ENCODE measurements at regions of chr15 and their contacts with region 1.

Region 1: GRCh38 chr15:40274350-40275274 is 8.3 kb downstream of the ANKRD63 start:
- DNase-seq: peak; percentile 80
- H3K4me3 Mint-ChIP-seq: no peak overlapping the region
- H3K27ac Mint-ChIP-seq: no peak overlapping the region
- H3K4me1 Mint-ChIP-seq: no peaks in the 10 kb centered on the region
- H3K27me3 Mint-ChIP-seq: no peaks in the 10 kb centered on the region
- CTCF ChIP-seq: peak; percentile 100

Region 2: DNA sequence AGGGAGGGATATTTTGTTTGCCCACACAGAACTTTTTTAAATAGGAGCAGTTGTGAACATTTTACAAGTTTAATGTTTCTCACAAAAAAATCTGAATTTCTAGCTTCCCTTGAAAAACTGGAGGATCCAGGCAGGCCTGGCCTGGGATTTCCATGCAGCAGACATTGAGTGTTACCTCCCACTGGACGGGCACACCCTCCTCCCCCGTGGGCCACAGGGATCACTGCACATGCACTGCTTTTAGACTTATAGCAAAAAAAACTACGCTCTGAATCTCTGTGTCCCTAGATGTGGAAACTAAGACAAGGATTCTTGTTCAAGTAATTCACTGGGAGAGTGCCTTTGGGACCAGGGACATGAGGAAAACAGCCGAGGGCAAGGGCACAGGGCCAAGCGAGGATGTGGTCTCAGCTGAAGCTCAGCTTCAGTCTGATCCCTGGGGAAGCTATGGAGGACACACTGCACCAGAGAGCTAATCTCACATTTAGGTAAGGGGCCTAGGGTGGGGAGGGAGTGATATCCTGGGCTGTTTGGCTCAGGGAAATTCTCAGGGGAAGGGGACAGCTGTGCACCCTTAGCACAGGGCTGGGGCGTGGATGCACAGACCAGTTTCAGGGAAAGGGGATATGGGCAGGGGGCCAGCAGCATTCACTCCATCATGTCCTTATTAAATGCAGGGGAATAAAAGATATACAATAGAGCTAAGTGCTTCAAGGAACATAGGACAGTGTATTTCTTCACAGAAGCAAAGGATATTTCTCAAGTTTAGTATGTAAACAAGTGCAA is 538.0 kb before region 1 on chr15:
- CTCF ChIA-PET with region 1: no interaction called
- POLR2A ChIA-PET with region 1: no interaction called
- intact Hi-C with region 1: no loop called
- DNase-seq: no peak
- H3K4me3 Mint-ChIP-seq: no peak overlapping the region
- H3K27ac Mint-ChIP-seq: no peak overlapping the region
- H3K4me1 Mint-ChIP-seq: no peaks in the 10 kb centered on the region
- H3K27me3 Mint-ChIP-seq: no peaks in the 10 kb centered on the region
- CTCF ChIP-seq: no peak

Region 3: DNA sequence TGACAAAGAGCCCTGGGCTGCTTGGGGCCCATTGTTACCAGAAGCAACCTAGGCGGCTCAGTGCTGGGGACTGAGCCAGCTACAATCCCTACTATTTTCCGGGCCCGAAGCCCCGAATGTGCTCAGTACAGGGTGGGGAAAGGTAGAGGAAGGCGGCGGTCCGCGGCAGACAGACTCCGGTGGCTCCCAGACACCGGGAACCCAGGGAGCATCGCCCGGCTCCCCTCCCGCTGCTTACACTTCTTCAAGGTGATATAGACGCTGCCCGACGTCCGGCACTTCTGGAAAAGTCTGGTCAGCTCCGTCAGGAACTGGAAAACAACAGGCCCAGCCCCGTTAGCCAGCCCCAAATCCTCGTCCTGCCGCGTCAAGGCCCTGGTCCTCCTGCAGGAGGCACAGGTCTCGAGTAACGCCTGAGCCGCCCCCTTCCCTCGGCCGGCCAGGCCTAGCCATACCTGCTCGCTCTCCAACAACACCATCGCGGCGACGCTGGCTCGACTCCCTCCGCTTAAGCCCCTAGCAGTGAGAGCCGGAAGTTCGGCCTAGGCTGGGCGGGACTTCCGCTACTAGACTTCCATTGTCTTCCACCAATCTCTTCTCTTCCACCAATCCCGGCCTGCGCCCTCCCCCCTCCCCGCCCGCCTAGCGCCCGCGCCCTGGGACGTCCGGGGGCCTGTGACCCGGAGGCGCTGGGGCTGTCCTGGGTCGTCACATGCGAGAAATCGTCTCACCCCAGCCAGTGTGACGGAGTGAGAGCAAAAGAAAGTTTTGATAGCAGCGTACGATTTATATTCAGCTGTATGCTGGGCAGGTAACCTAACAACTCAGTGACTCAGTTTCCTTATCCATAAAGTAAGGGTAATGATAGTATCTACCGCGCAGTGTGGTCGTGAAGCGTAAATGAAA is 235.7 kb before region 1 on chr15 and contains the start of gene SRP14:
- CTCF ChIA-PET with region 1: interaction called, 23 read pairs
- POLR2A ChIA-PET with region 1: no interaction called
- intact Hi-C with region 1: no loop called
- DNase-seq: peak; percentile 93
- H3K4me3 Mint-ChIP-seq: peak within 1 kb of the TSS; percentile 92
- H3K27ac Mint-ChIP-seq: peak within 1 kb of the TSS; percentile 97
- H3K4me1 Mint-ChIP-seq: peaks cover 9% of the 10 kb centered on the region
- H3K27me3 Mint-ChIP-seq: no peaks in the 10 kb centered on the region
- CTCF ChIP-seq: no peak
- total RNA-seq, gene SRP14: 165 and 203 TPM in 2 replicates

Region 4: GRCh38 chr15:40217159-40217824 is 57.3 kb before region 1 on chr15:
- CTCF ChIA-PET with region 1: interaction called, 657 read pairs
- POLR2A ChIA-PET with region 1: interaction called, 17 read pairs
- intact Hi-C with region 1: loop called (anchors 1 kb)
- DNase-seq: peak; percentile 70
- H3K4me3 Mint-ChIP-seq: no peak overlapping the region
- H3K27ac Mint-ChIP-seq: no peak overlapping the region
- H3K4me1 Mint-ChIP-seq: peaks cover 6% of the 10 kb centered on the region
- H3K27me3 Mint-ChIP-seq: no peaks in the 10 kb centered on the region
- CTCF ChIP-seq: peak; percentile 91

Region 5: DNA sequence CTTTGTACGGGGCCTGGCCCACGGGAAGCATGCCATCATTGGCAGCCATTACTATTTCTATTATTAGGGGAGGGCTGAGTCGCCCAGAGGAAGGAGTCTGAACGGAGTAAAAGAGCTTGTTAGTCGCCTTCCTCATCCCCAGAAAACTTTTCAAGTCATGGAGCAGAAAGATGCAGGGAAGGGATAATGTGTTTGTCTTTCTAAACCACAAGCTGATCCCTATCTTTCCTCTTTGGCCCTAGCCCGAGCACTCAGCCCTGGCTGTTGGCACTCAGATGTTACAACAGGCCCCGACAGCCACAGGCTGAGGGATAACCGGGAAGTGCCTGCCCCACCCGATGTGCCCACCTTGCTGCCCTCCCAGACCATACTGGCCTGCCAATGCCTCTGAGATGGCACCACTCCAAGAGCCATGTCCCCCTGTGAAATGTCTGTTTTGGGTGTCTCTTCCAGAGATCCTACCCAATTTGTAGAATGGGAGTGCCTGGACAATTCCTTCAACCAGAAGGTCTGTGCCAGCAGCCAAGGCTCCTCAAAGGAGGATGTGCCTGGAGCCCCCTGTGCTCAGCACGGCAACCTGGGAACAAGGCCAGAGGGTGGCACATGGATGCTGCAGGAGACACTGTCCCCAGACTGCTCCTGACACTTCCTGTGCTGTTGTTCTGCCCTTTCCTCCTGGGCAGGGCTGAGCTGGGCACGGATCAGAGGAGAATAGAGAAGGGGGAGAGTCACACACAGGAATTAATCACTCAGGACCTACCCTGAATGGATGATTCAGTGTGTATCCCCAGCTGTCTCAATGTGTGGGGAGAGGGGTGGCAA is 24.9 kb before region 1 on chr15:
- CTCF ChIA-PET with region 1: interaction called, 127 read pairs
- POLR2A ChIA-PET with region 1: no interaction called
- intact Hi-C with region 1: no loop called
- DNase-seq: no peak
- H3K4me3 Mint-ChIP-seq: no peak overlapping the region
- H3K27ac Mint-ChIP-seq: peak overlapping the region; percentile 49
- H3K4me1 Mint-ChIP-seq: peaks cover 12% of the 10 kb centered on the region
- H3K27me3 Mint-ChIP-seq: no peaks in the 10 kb centered on the region
- CTCF ChIP-seq: no peak

Region 6: GRCh38 chr15:40307421-40308211 is 33.0 kb after region 1 on chr15 and contains the start of gene PLCB2:
- CTCF ChIA-PET with region 1: interaction called, 137 read pairs
- POLR2A ChIA-PET with region 1: interaction called, 3 read pairs
- intact Hi-C with region 1: loop called (anchors 1 kb)
- DNase-seq: no peak
- H3K4me3 Mint-ChIP-seq: no peak within 1 kb of the TSS
- H3K27ac Mint-ChIP-seq: no peak within 1 kb of the TSS
- H3K4me1 Mint-ChIP-seq: no peaks in the 10 kb centered on the region
- H3K27me3 Mint-ChIP-seq: peaks cover 13% of the 10 kb centered on the region
- CTCF ChIP-seq: no peak
- total RNA-seq, gene PLCB2: 0.15 and 0.84 TPM in 2 replicates

Region 7: GRCh38 chr15:40367686-40368611 is 93.3 kb after region 1 on chr15:
- CTCF ChIA-PET with region 1: interaction called, 40 read pairs
- POLR2A ChIA-PET with region 1: no interaction called
- intact Hi-C with region 1: loop called (anchors 1 kb)
- DNase-seq: peak; percentile 90
- H3K4me3 Mint-ChIP-seq: peak overlapping the region; percentile 64
- H3K27ac Mint-ChIP-seq: peak overlapping the region; percentile 91
- H3K4me1 Mint-ChIP-seq: peaks cover 6% of the 10 kb centered on the region
- H3K27me3 Mint-ChIP-seq: no peaks in the 10 kb centered on the region
- CTCF ChIP-seq: peak; percentile 78

Measured in MCF 10A (cell line).